HCT116 (cell line): ENCODE measurements at regions of chr1 and their contacts with region 1.

Region 1: GRCh38 chr1:8197493-8198282 is 120.2 kb upstream of the SLC45A1 start:
- DNase-seq: peak; percentile 97
- ATAC-seq: peak; percentile 74
- H3K4me3 ChIP-seq: no peak overlapping the region
- H3K27ac ChIP-seq: peak overlapping the region; percentile 91
- H3K4me1 ChIP-seq: peaks cover 87 to 99% of the 10 kb centered on the region in 2 experiments
- H3K27me3 ChIP-seq: no peaks in the 10 kb centered on the region
- CTCF ChIP-seq: no peak
- POLR2A ChIP-seq: peak; percentile 26
- RAD21 ChIP-seq: no peak

Region 2: DNA sequence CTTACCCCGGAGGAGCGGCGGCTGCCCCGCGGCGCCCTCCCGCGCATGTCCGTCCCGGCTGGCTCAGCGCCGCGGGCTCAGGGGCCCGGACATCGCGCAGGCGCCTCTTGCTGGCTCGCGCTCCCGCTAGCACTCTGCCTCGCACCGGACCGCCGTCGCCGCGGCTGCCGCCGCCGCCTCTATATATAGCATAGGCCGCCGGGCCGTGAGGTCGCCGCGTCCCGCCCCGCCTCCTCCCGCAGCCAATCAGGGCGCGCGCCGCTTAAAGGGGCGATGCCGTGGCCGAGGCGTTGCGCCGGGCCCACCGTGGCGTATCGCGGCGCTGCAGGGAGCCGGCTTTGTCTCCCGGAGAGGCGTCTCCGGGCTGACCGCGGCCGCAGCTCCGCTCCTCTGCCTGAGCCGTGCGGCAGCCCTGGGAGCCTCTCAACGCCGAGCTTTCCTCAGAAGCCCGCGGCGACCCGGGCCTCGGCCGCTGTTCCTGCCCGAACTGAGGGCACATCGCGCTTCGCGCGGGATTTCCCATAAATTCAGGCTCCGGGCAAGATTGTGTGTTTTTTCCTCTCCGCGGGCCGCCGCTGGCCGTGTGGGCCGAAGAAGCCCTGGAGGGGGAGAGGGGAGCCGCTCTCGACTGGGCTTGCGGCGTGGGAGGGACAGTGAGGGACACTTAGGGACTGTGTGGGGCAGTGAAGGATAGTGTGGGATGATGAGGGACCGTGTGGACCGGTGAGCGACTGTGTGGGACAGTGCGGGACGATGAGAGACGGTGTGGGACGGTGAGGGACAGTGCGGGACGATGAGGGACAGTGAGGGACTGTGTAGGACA is 171.3 kb before region 1 on chr1 and contains the start of gene ERRFI1:
- CTCF ChIA-PET with region 1: interaction called, 5 read pairs
- POLR2A ChIA-PET with region 1: interaction called, 19 read pairs
- RAD21 ChIA-PET with region 1: no interaction called
- intact Hi-C with region 1: loop called (anchors 1 kb)
- DNase-seq: peak; percentile 83
- ATAC-seq: peak; percentile 74
- H3K4me3 ChIP-seq: peak within 1 kb of the TSS; percentile 88 to 93
- H3K27ac ChIP-seq: peak within 1 kb of the TSS; percentile 99
- H3K4me1 ChIP-seq: peaks cover 64 to 87% of the 10 kb centered on the region in 2 experiments
- H3K27me3 ChIP-seq: no peaks in the 10 kb centered on the region
- CTCF ChIP-seq: no peak
- POLR2A ChIP-seq: peak; percentile 96
- RAD21 ChIP-seq: no peak
- total RNA-seq, gene ERRFI1: 777 TPM

Region 3: GRCh38 chr1:8121261-8122170 is 76.2 kb before region 1 on chr1:
- CTCF ChIA-PET with region 1: no interaction called
- POLR2A ChIA-PET with region 1: interaction called, 6 read pairs
- RAD21 ChIA-PET with region 1: interaction called in 1 of 2 experiments, 3 read pairs
- intact Hi-C with region 1: loop called (anchors 1 kb)
- DNase-seq: peak; percentile 95
- ATAC-seq: peak; percentile 65
- H3K4me3 ChIP-seq: peak overlapping the region in 1 of 2 experiments; percentile 15; a peak in 1 of 4 replicates
- H3K27ac ChIP-seq: peak overlapping the region; percentile 99
- H3K4me1 ChIP-seq: peaks cover 72 to 83% of the 10 kb centered on the region in 2 experiments
- H3K27me3 ChIP-seq: no peaks in the 10 kb centered on the region
- CTCF ChIP-seq: no peak
- POLR2A ChIP-seq: no peak
- RAD21 ChIP-seq: no peak

Region 4: DNA sequence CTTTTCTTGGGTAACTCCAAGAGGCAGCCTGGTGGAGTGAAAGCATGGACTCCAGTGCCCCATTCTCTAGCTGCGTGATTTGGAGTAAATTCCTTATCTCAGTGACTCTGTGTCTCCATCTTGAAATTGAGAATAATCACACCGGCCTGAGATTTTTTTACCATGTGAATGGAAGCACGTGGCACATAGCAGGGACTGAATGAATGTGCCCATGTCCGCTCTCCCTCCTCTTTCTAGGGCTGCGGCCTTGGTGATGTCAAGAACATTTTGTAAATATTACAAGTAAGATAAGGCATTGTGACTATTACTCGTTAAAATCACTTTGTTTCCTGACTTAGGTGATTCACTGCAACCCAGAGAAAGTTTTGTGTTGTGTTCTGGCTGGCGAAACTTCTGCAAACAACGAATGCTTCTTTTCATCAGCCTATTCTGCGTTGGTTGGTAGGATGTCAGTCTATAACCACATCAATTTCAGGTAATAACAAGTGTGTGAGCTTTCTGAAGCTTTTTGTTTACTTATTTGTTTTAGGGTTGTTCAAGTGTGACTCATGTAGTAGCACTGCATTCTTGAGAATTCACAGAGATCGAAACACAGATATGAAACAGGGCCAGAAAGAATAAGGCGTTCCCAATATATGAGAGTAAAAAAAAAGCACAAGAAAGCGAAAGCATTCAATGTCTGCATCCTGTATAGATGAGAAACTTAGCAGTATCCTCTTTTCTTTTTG is 15.5 kb before region 1 on chr1:
- CTCF ChIA-PET with region 1: no interaction called
- POLR2A ChIA-PET with region 1: interaction called, 15 read pairs
- RAD21 ChIA-PET with region 1: interaction called in 1 of 2 experiments, 4 read pairs
- intact Hi-C with region 1: no loop called
- DNase-seq: peak; percentile 96
- ATAC-seq: peak; percentile 85
- H3K4me3 ChIP-seq: peak overlapping the region in 1 of 2 experiments; percentile 23; a peak in 2 of 4 replicates
- H3K27ac ChIP-seq: peak overlapping the region; percentile 97
- H3K4me1 ChIP-seq: peaks cover 41 to 59% of the 10 kb centered on the region in 2 experiments
- H3K27me3 ChIP-seq: no peaks in the 10 kb centered on the region
- CTCF ChIP-seq: no peak
- POLR2A ChIP-seq: no peak
- RAD21 ChIP-seq: no peak

Region 5: DNA sequence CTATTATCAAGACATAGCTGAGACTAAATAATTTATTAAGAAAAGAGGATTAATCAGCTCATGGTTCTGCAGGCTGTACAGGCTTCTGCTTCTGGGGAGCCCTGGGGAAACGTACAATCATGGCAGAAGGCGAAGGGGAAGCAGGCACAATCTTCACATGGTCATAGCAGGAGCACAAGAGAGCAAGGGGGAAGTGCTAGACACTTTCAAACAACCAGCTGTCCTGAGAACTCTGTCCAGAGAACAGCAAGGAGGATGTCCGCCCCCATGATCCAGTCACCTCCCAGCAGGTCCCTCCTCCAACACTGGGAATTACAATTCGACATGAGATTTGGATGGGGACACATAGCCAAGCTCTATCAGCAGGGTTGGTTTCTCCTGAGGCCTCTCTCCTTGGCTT is 109.9 kb after region 1 on chr1:
- CTCF ChIA-PET with region 1: no interaction called
- POLR2A ChIA-PET with region 1: interaction called, 3 read pairs
- RAD21 ChIA-PET with region 1: no interaction called
- intact Hi-C with region 1: loop called (anchors 5 kb)
- DNase-seq: no peak
- ATAC-seq: peak; percentile 20
- H3K4me3 ChIP-seq: no peak overlapping the region
- H3K27ac ChIP-seq: no peak overlapping the region
- H3K4me1 ChIP-seq: peaks cover 3 to 9% of the 10 kb centered on the region in 2 experiments; a peak in 3 of 4 replicates
- H3K27me3 ChIP-seq: no peaks in the 10 kb centered on the region
- CTCF ChIP-seq: no peak
- POLR2A ChIP-seq: no peak
- RAD21 ChIP-seq: no peak